H1 (cell line): ENCODE measurements at regions of chr20 and their contacts with region 1.

Region 1: GRCh38 chr20:36154700-36155628 is at the start of gene EPB41L1:
- DNase-seq: peak in 1 of 2 experiments; percentile 79
- H3K4me3 ChIP-seq: peak within 1 kb of the TSS; percentile 50 to 91 (median 57)
- H3K27ac ChIP-seq: no peak within 1 kb of the TSS
- H3K4me1 ChIP-seq: peaks cover 3 to 15% (median 9%) of the 10 kb centered on the region in 4 experiments
- H3K27me3 ChIP-seq: peaks cover 0 to 4% (median under 1%) of the 10 kb centered on the region in 4 experiments; a peak in 3 of 7 replicates
- CTCF ChIP-seq: no peak
- EP300 ChIP-seq: no peak
- POLR2A ChIP-seq: no peak
- RAD21 ChIP-seq: no peak
- total RNA-seq, gene EPB41L1: 36.0 and 42.0 TPM in 2 replicates

Region 2: DNA sequence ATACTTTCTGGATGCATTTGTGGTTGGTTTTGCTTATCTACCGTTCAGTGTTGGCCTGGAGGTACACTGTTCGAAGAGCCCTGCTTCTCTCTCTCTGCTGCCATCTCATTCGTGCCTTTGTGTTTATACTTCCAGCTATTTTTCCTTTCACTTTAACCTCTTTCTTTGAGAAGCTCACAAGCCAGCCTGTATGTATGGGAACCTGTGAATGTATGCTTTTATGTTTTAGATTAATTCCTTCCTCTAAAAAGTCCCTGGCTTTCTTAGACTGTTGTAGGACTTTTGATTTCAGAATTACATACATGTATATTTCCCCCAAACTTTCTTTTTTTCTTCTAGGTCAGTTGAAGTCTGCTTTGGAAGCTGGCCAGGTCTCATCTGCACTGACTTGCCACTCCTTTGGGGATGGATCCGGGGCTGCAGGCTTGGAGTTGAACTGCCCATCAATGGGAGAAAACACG is 283.6 kb before region 1 on chr20:
- CTCF ChIA-PET with region 1: no interaction called
- POLR2A ChIA-PET with region 1: no interaction called
- DNase-seq: no peak
- H3K4me3 ChIP-seq: no peak overlapping the region
- H3K27ac ChIP-seq: no peak overlapping the region
- H3K4me1 ChIP-seq: no peaks in the 10 kb centered on the region
- H3K27me3 ChIP-seq: no peaks in the 10 kb centered on the region
- CTCF ChIP-seq: no peak
- EP300 ChIP-seq: no peak
- POLR2A ChIP-seq: no peak
- RAD21 ChIP-seq: no peak

Region 3: DNA sequence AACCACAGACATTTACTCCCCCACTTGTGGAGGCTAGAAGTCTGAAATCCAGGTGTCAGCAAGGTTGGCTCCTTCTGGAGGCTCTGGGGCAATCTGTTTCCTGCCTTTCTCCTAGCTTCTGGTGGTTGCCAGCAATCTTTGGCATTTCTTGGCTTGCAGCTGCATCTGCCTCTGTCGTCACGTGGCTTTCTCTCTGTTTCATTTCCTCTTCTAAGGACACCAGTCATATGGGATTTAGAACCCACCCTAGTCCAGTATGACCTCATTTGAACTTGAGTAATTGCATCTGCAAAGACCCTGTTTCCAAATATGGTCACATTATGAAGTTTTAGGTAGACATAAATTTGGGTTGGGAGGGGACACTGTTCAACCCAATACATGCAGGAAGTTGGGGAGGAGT is 56.6 kb before region 1 on chr20:
- CTCF ChIA-PET with region 1: interaction called, 12 read pairs
- POLR2A ChIA-PET with region 1: no interaction called
- DNase-seq: no peak
- H3K4me3 ChIP-seq: no peak overlapping the region
- H3K27ac ChIP-seq: no peak overlapping the region
- H3K4me1 ChIP-seq: peaks cover 9 to 16% (median 10%) of the 10 kb centered on the region in 4 experiments
- H3K27me3 ChIP-seq: peaks cover 44 to 85% (median 77%) of the 10 kb centered on the region in 4 experiments
- CTCF ChIP-seq: no peak
- EP300 ChIP-seq: no peak
- POLR2A ChIP-seq: no peak
- RAD21 ChIP-seq: no peak

Region 4: DNA sequence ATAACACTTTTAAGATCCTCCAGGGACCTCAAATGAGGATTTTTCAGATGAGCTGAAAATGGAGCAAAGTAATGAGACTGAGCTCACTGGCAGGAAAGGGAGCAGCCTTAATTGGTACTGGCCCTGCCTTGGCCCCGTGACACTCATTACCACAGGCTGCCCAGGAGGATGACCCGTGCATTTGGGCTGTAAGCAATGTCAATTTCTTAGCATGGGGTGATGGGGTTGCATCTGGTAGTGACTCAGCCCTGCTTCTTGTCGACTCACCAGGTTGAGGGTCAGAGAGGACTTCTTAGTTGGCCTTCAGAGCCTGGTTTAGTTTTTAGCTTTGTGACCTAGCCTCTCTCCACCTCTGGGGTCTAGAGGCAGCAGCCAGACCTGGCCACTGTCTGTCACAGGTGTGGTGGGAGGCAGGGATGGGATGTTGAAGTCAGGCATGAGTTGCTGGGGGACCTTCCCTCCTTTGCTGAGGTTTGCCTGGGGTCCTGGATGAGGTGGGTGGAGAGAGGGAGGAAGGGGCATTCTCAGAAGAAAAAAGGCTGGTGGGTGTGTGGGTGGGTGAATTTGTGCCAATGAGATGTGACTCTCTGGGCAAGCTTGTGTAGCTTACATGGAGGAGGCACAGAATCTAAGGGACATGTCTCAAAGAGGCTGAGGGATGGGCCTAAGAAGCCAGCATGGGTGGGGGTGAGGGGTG is 26.4 kb before region 1 on chr20:
- CTCF ChIA-PET with region 1: interaction called, 11 read pairs
- POLR2A ChIA-PET with region 1: no interaction called
- DNase-seq: no peak
- H3K4me3 ChIP-seq: no peak overlapping the region
- H3K27ac ChIP-seq: no peak overlapping the region
- H3K4me1 ChIP-seq: peaks cover 0 to 3% (median 1%) of the 10 kb centered on the region in 4 experiments; a peak in 3 of 7 replicates
- H3K27me3 ChIP-seq: no peaks in the 10 kb centered on the region
- CTCF ChIP-seq: no peak
- EP300 ChIP-seq: no peak
- POLR2A ChIP-seq: no peak
- RAD21 ChIP-seq: no peak

Region 5: DNA sequence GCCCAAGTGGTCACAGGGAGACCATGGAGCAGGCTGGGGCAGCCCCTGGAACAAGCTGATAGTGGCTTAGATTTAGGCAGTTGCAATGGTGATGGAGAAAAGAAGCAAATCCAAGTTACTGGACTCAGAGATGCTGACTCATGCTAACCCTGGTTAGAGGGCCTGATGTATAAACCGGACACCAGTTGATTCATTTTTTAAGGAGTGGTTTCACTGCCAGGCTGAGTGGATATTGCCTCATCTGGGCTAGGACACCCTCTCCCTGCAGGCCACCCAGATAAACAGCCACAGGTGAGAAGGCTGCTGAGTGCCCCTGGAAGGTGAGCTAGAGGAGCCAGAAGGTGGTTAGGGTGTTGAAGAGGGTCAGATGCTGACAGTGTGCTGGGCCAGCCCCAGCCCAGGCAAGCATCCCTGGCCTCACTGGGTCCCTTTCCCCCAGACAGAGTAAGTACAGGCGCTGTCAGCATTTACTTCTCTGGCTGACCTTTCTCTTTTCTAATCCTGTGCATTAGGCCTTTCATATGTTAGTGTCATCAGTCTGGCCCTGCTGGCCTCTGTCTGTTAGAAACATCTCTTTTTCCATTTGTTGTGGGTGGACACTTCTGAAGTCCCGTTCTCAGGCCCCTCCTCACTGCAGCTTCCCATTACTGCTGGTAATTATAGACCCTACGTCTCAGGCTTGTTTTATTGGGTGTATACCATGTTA is 13.0 kb after region 1 on chr20:
- CTCF ChIA-PET with region 1: interaction called, 38 read pairs
- POLR2A ChIA-PET with region 1: no interaction called
- DNase-seq: no peak
- H3K4me3 ChIP-seq: no peak overlapping the region
- H3K27ac ChIP-seq: no peak overlapping the region
- H3K4me1 ChIP-seq: 0 out of 7 replicates have a peak, but pooled peaks cover 0 to 2% (median under 1%) of the 10 kb centered on the region in 4 experiments
- H3K27me3 ChIP-seq: no peaks in the 10 kb centered on the region
- CTCF ChIP-seq: no peak
- EP300 ChIP-seq: no peak
- POLR2A ChIP-seq: no peak
- RAD21 ChIP-seq: no peak

Region 6: DNA sequence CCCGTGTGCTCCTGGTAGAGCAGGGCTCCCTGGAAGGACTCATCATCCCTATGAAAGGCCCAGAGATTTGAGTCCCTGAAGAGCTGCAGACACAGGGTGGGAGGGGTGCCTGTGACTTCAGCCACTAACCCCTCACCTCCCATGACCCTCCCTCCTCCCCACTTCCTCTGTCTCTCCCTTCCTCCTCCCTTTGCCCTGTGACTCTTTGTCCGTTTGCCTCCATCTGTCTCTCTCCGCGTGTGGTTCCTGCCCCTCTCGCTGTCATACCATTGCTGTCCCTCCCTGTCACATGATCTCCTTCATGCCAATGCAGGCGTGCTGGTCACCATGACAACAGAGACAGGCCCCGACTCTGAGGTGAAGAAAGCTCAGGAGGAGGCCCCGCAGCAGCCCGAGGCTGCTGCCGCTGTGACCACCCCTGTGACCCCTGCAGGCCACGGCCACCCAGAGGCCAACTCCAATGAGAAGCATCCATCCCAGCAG is 18.5 kb after region 1 on chr20:
- CTCF ChIA-PET with region 1: interaction called, 38 read pairs
- POLR2A ChIA-PET with region 1: no interaction called
- DNase-seq: peak; percentile 25 to 70
- H3K4me3 ChIP-seq: peak overlapping the region in 2 of 4 experiments; percentile 3 to 18; a peak in 2 of 8 replicates
- H3K27ac ChIP-seq: no peak overlapping the region
- H3K4me1 ChIP-seq: peaks cover 0 to 9% (median 6%) of the 10 kb centered on the region in 4 experiments; a peak in 6 of 7 replicates
- H3K27me3 ChIP-seq: no peaks in the 10 kb centered on the region
- CTCF ChIP-seq: no peak
- EP300 ChIP-seq: no peak
- POLR2A ChIP-seq: no peak
- RAD21 ChIP-seq: no peak

Region 7: DNA sequence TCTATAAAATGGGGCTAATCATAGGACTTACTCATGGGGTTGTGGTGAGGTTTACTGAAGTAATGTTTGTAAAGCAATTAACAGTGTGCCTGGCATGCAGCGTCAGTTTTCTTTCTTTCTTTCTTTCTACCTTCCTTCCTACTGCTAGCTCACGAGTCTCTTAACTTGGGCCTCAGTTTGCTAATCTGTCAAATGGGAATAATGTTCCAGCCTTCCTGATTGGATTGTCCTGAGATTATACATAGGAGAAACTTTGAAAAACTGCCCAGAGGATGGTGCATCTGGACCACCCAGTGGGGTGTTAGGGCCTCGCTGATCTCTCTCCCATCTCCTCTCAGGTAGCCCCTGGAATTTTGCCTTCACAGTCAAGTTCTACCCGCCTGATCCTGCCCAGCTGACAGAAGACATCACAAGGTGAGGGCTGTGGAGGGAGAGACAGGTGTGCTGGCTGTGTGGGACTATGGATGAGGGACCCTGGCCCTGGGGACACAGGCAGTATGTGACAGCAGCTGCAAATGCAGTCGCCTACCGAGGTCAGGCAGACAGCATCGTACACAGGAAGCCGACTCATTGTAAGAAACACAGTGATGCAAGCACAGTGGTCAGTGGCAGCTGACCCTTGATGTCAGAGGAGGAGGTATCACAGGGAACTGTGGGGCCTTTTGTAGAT is 27.1 kb after region 1 on chr20:
- CTCF ChIA-PET with region 1: interaction called, 22 read pairs
- POLR2A ChIA-PET with region 1: no interaction called
- DNase-seq: no peak
- H3K4me3 ChIP-seq: no peak overlapping the region
- H3K27ac ChIP-seq: no peak overlapping the region
- H3K4me1 ChIP-seq: no peaks in the 10 kb centered on the region
- H3K27me3 ChIP-seq: no peaks in the 10 kb centered on the region; a peak in 1 of 7 replicates
- CTCF ChIP-seq: no peak
- EP300 ChIP-seq: no peak
- POLR2A ChIP-seq: no peak
- RAD21 ChIP-seq: no peak

Region 8: DNA sequence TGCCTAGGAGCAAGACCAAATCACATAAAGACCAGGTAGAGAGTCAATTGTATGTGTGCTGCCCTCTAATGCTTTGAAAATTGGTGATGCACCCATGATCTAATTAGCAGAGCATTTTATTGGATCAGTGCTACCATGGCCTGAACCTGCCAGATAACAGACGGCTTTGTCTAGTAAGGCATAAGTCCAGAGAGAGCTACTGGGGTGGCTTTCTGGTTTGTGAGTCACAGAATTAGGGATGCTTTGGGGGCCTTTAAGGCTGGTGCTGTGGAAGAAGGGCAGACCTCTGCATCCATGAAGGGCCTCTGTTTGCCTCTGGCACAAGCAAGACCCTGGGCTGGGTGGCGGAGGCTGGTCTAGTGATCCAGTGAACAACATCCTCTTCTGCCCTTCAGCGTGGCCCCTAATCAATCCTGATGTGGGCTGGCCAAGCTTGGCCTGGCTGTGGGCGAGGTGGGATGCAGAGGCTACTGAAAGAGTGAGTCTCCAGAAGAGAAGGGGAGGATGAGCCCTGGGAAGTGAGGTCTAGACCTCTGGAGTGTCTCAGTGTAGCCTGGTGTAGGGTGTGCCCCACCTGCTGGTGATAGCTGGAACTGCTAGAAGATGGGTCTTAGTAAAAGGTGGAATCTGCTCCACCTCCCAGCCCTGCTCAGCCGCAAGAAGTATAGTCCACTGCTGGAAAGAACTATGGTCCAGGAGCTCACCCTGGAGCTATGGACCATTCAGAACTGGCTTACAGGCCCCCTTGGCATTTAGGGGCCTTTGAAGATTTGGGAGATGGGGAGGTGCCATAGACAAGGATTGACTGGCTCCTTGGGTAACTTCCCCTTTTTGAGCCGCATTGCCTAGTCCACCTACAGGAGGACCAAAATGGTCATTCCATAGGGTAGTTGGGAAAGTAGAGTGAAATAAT is 44.6 kb after region 1 on chr20:
- CTCF ChIA-PET with region 1: interaction called, 114 read pairs
- POLR2A ChIA-PET with region 1: no interaction called
- DNase-seq: peak; percentile 53 to 96
- H3K4me3 ChIP-seq: no peak overlapping the region
- H3K27ac ChIP-seq: no peak overlapping the region
- H3K4me1 ChIP-seq: no peaks in the 10 kb centered on the region
- H3K27me3 ChIP-seq: no peaks in the 10 kb centered on the region
- CTCF ChIP-seq: peak; percentile 84 to 97 (median 85)
- EP300 ChIP-seq: no peak
- POLR2A ChIP-seq: no peak
- RAD21 ChIP-seq: peak; percentile 85 to 86